ENCODE measurements at regions of chr17 and their contacts with region 1.

Region 1: DNA sequence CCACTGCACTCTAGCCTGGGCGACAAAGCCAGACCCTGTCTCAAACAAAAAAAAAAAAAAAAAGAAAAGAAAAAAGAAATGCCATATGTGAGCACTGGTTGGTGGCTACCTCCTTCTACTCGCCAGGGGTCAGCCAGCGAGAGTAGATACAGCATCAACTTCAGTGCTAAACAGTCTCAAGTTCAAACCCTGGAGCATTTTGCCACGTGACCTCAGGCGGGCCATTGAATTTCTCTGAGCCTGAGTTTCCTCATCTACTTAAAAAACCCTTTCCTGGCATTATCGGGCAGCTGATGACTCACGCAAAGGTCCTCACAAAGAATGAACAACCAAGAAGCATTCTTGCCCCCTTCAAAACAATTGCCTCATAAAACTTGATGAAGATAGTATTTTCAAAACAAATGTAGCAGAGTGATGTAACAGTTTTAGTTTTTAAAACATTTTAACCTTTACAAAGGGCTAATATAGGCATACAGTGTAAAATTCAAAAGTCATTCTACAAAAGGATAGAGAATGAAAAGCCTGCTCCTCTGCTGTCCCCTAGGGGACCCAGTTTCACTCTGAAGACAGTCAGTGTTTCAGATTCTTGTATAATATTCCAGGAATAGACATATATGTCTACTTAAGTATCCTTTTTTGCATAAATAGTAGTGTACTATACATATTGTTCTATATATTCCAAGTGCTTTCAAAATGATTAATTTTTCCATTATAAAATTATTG is 28.4 kb downstream of the DNAH2 start:
- DNase-seq: no peak
- H3K4me3 Mint-ChIP-seq: no peak overlapping the region
- H3K27ac Mint-ChIP-seq: no peak overlapping the region
- H3K4me1 Mint-ChIP-seq: no peaks in the 10 kb centered on the region
- H3K27me3 Mint-ChIP-seq: peaks cover 18% of the 10 kb centered on the region

Region 2: GRCh38 chr17:7823581-7824397 is 77.9 kb after region 1 on chr17:
- intact Hi-C with region 1: loop called (anchors 1 kb)
- DNase-seq: no peak
- H3K4me3 Mint-ChIP-seq: no peak overlapping the region
- H3K27ac Mint-ChIP-seq: peak overlapping the region; percentile 12
- H3K4me1 Mint-ChIP-seq: peaks cover 7% of the 10 kb centered on the region
- H3K27me3 Mint-ChIP-seq: peaks cover 20% of the 10 kb centered on the region